Astrocyte of the spinal cord (primary cell): ENCODE measurements at regions of chr11 and their contacts with region 1.

Region 1: DNA sequence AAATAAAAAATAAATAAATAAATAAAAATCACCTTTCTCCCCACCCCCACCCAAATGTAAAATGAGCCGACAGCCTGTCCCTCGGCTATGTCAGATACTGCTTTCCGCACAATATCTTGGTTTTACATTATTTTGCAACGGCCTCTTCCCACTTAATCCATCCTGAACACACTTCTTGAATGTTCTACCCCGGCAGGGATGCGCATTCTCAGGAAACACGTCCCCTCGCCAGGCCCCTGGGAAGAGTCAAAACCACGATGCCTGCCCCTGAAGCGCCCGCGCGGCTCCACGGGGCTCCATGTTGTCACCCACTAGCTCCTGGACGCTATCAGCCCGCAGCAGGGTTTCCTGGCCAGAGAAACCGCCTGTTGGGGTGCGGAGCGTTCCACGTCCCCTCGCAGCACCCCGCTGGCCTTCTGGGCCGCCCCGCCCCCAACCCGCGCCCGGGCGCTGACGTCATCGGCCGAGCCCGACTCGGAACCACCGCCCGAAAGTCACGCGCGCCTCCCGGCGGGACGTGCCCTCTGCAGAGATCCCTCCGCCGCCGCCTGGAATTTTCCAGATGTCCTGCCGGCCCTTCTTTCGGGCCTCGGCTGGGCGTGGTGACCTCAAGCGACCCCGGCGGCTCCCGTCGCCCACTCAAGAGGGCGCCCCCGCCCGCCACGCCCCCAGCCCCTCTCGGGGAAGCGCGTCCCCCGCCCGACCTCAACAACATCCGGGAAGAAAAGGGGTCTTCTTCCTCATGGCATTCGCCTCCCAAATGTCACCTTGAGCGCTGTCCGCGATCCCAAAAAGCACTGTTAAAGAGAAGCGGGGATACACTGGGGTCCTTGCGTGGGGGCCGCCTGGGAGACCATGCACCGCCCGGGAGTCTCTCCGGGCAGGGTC is 551 bp upstream of the NEAT1 start:
- DNase-seq: peak; percentile 98
- H3K4me3 ChIP-seq: peak overlapping the region; percentile 95
- CTCF ChIP-seq: no peak

Region 2: GRCh38 chr11:65497141-65498041 is 75.3 kb after region 1 on chr11:
- in situ Hi-C with region 1: loop called (anchors 5 kb)
- DNase-seq: peak; percentile 99
- H3K4me3 ChIP-seq: peak overlapping the region; percentile 91
- CTCF ChIP-seq: no peak